ENCODE measurements at regions of chr22 and their contacts with region 1.

Region 1: DNA sequence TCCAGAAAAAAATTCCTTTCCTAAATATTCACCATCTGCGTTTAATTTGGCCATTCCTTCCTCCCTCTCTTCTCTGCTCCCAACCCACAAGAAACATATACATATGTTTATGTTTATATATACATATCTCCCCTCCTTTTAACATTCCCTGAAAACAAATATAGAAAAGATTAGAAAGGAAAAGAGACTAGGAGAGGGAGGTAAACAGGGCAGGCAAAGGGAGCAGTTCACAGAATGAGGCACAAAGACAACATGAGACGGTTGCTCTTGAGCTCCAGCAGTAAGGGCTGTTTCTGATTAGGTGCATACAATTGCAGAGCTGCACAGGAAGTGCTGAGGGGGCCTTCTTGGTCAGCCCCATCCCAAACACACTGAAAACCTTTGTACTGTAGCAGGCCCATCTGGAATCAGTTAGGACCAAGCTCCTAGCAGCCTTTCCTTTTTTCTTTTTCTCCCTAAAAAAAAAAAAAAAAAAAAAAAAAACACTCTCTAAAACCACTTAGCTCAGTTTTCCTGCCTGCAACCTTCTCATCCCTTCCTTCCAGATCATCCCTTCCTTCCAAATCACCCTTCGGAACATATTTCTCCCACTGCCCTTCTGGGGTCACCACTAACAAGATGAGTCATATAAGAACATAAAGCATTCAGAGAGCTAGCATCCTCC is 57.0 kb downstream of the RBFOX2 start:
- DNase-seq: no peak
- ATAC-seq: no peak
- H3K4me3 ChIP-seq: no peak overlapping the region
- H3K27ac ChIP-seq: no peak overlapping the region
- H3K4me1 ChIP-seq: peaks cover 7% of the 10 kb centered on the region; the same call in 1 of the 2 replicates
- H3K27me3 ChIP-seq: no peaks in the 10 kb centered on the region
- CTCF ChIP-seq: no peak

Region 2: DNA sequence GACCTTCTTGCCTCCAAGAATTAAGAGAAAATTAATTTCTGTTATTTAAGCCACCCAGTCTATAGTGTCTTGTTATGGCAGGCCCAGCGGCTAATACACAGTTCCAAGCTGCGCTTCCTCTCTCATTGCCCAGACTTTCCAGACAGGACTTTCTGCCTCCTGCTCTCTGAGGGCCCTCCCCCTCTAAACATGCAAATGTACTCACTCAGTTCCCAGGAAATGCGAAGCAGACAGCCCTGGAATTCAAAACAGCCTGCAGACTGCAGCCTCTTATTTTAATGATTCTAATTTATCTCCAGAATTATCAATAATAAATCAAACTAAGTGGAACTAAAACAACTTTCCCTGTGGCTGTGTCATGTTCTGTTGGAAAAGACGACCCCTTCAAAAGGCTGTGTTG is 1021.1 kb before region 1 on chr22:
- CTCF ChIA-PET with region 1: no interaction called
- POLR2A ChIA-PET with region 1: interaction called, 14 read pairs
- in situ Hi-C with region 1: no loop called
- intact Hi-C with region 1: no loop called
- DNase-seq: no peak
- ATAC-seq: no peak
- H3K4me3 ChIP-seq: no peak overlapping the region
- H3K27ac ChIP-seq: no peak overlapping the region
- H3K4me1 ChIP-seq: no peaks in the 10 kb centered on the region
- H3K27me3 ChIP-seq: no peaks in the 10 kb centered on the region
- CTCF ChIP-seq: no peak

Region 3: GRCh38 chr22:36052505-36053270 is 81.1 kb after region 1 on chr22:
- CTCF ChIA-PET with region 1: interaction called, 11 read pairs
- POLR2A ChIA-PET with region 1: no interaction called
- in situ Hi-C with region 1: no loop called
- intact Hi-C with region 1: no loop called
- DNase-seq: no peak
- ATAC-seq: peak; percentile 70; the same call in 1 of the 2 replicates
- H3K4me3 ChIP-seq: no peak overlapping the region
- H3K27ac ChIP-seq: no peak overlapping the region
- H3K4me1 ChIP-seq: no peaks in the 10 kb centered on the region; the same call in 1 of the 2 replicates
- H3K27me3 ChIP-seq: no peaks in the 10 kb centered on the region
- CTCF ChIP-seq: no peak